Caco-2 (cell line): ENCODE measurements at regions of chr9 and their contacts with region 1.

Region 1: GRCh38 chr9:88388172-88388885 is at the start of gene SPIN1:
- DNase-seq: peak; percentile 75 to 85
- H3K4me3 ChIP-seq: peak within 1 kb of the TSS; percentile 76
- H3K4me3 Mint-ChIP-seq: peak within 1 kb of the TSS; percentile 89
- H3K27ac Mint-ChIP-seq: peak within 1 kb of the TSS; percentile 86
- H3K4me1 ChIP-seq: no peaks in the 10 kb centered on the region; the same call in 1 of the 2 replicates
- H3K4me1 Mint-ChIP-seq: peaks cover 13% of the 10 kb centered on the region
- H3K27me3 ChIP-seq: no peaks in the 10 kb centered on the region
- H3K27me3 Mint-ChIP-seq: no peaks in the 10 kb centered on the region
- CTCF ChIP-seq: no peak
- total RNA-seq, gene SPIN1: 51.7 and 53.4 TPM in 2 replicates

Region 2: DNA sequence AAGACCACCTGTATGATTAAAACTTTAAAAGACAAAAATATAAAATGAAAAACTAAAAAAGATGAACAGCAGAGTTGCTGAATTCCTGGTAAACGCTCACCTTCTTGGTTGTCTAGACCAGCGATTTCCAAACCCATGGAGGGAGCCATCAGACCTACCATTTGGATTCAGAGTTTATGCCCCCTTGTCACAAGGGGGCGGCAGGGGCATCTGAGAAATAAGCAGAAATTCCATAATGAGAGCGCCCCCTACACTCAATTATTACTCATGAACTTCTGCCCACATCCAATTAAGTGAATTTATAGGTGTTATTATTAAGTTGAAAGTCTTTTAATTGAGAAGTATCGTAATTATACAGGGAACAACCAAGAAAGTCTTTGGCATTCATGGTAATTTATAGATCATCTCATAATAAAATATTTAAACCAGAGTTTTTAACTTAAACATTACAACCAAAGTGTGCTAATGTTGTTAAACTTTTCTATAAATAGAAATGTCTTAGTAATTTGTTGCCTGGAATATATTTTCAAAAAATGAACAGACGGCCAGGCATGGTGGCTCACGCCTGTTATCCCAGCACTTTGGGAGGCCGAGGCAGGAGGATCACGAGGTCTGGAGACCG is 214.8 kb before region 1 on chr9:
- CTCF ChIA-PET with region 1: no interaction called
- POLR2A ChIA-PET with region 1: no interaction called
- intact Hi-C with region 1: loop called (anchors 5 kb)
- DNase-seq: peak; percentile 56 to 57
- H3K4me3 ChIP-seq: no peak overlapping the region
- H3K4me3 Mint-ChIP-seq: no peak overlapping the region
- H3K27ac Mint-ChIP-seq: no peak overlapping the region
- H3K4me1 ChIP-seq: no peaks in the 10 kb centered on the region
- H3K4me1 Mint-ChIP-seq: no peaks in the 10 kb centered on the region
- H3K27me3 ChIP-seq: no peaks in the 10 kb centered on the region
- H3K27me3 Mint-ChIP-seq: no peaks in the 10 kb centered on the region
- CTCF ChIP-seq: peak; percentile 61 to 76

Region 3: GRCh38 chr9:88342246-88342645 is 46.1 kb before region 1 on chr9:
- CTCF ChIA-PET with region 1: no interaction called
- POLR2A ChIA-PET with region 1: no interaction called
- intact Hi-C with region 1: loop called (anchors 5 kb)
- DNase-seq: no peak
- H3K4me3 ChIP-seq: no peak overlapping the region
- H3K4me3 Mint-ChIP-seq: no peak overlapping the region
- H3K27ac Mint-ChIP-seq: peak overlapping the region; percentile 37
- H3K4me1 ChIP-seq: peaks cover 19% of the 10 kb centered on the region
- H3K4me1 Mint-ChIP-seq: peaks cover 13% of the 10 kb centered on the region
- H3K27me3 ChIP-seq: no peaks in the 10 kb centered on the region
- H3K27me3 Mint-ChIP-seq: no peaks in the 10 kb centered on the region
- CTCF ChIP-seq: no peak

Region 4: DNA sequence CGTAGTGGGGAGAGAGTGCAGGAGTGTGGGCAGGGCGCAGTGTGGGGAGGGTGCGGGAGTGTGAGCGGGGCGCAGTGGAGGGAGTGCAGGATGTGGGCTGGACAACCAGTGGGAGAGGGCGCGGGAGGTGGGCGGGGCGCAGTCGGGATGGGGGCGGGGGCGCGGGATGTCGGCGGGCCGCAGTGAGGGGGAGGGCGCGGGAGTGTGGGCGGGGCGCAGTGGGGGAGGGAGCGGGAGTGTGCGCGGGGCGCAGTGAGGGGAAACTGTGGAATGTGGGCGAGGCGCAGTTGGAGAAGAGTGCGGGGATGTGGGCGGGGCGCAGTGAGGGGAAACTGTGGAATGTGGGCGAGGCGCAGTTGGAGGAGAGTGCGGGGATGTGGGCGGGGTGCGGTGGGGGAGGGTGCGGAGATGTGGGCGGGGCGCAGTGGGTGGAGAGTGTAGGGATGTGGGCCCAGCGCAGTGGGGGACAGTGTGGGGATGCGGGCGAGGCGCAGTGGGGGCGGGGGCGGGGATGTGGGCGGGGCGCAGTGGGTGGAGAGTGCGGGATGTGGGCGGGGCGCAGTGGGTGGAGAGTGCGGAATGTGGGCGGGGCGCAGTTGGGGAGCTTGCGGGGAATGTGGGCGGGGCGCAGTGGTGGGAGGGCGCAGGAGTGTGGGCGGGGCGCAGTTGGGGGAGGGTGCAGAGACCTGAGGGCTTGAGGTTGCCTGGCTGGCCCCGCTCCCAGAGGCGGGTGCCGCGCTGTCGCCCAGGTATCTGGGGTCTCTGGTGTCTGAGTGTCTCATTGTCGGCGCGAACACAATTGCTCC is 146.3 kb after region 1 on chr9 and contains the start of gene NXNL2:
- CTCF ChIA-PET with region 1: no interaction called
- POLR2A ChIA-PET with region 1: no interaction called
- intact Hi-C with region 1: loop called (anchors 5 kb)
- DNase-seq: peak; percentile 86 to 91
- H3K4me3 ChIP-seq: peak within 1 kb of the TSS; percentile 65
- H3K4me3 Mint-ChIP-seq: peak within 1 kb of the TSS; percentile 80
- H3K27ac Mint-ChIP-seq: peak within 1 kb of the TSS; percentile 63
- H3K4me1 ChIP-seq: peaks cover 9% of the 10 kb centered on the region; the same call in 1 of the 2 replicates
- H3K4me1 Mint-ChIP-seq: peaks cover 12% of the 10 kb centered on the region
- H3K27me3 ChIP-seq: no peaks in the 10 kb centered on the region
- H3K27me3 Mint-ChIP-seq: no peaks in the 10 kb centered on the region
- CTCF ChIP-seq: no peak
- total RNA-seq, gene NXNL2: 0.52 and 0.60 TPM in 2 replicates